PC-3 (cell line): ENCODE measurements at regions of chr15 and their contacts with region 1.

Region 1: GRCh38 chr15:57866149-57866736 is 159.7 kb downstream of the POLR2M start:
- DNase-seq: peak; percentile 69
- ATAC-seq: no peak; the same call in 1 of the 2 replicates
- H3K4me3 ChIP-seq: no peak overlapping the region
- H3K27ac ChIP-seq: no peak overlapping the region
- H3K4me1 ChIP-seq: no peaks in the 10 kb centered on the region
- H3K27me3 ChIP-seq: no peaks in the 10 kb centered on the region
- CTCF ChIP-seq: peak; percentile 80

Region 2: GRCh38 chr15:58070801-58071418 is 204.7 kb after region 1 on chr15:
- CTCF ChIA-PET with region 1: interaction called, 6 read pairs
- POLR2A ChIA-PET with region 1: no interaction called
- intact Hi-C with region 1: loop called (anchors 1 kb)
- DNase-seq: peak; percentile 64
- ATAC-seq: 0 out of 2 replicates have a peak, but pooled peaks have one; percentile 19
- H3K4me3 ChIP-seq: no peak overlapping the region
- H3K27ac ChIP-seq: no peak overlapping the region
- H3K4me1 ChIP-seq: no peaks in the 10 kb centered on the region
- H3K27me3 ChIP-seq: peaks cover 22% of the 10 kb centered on the region; the same call in 1 of the 2 replicates
- CTCF ChIP-seq: peak; percentile 92